A673 (cell line): ENCODE measurements at regions of chr1 and their contacts with region 1.

Region 1: DNA sequence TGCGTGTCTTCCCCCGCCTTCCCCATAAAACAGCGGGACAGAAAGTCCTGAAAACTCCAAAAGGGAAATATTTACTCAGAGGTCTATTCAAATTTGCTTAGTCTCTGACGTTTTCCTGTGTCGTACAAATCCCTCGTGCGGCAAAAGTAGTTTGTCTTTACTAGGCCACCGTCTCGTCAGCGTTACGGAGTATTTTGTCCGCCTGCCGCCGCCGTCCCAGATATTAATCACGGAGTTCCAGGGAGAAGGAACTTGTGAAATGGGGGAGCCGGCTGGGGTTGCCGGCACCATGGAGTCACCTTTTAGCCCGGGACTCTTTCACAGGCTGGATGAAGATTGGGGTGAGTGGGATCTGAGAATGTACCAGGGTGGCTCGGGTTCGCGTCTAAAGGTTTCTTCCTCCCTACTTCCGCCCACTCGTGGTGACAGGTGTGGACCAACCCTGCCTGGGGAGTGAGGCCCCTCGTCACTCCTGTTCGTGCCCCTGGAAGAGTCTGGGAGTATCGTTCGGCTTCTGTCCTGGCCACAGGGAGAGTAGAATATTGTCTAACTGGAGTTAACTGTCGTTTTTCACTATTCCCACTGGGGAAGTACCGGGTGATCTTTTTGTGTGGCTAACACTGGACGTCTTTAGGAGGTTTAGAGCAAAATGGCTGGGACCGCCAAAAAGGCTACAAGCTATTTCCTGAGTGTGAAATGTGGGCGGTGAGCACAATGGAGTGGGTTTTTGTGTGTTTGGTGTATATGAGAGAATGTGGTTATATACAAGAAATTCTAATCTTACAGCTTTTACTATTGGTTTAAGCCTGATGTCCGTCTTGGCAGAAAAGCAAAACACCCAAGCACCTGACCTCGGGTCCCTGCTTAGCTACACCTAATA is at the start of gene ATF6:
- DNase-seq: peak; percentile 96
- H3K4me3 ChIP-seq: peak within 1 kb of the TSS; percentile 67
- H3K27ac ChIP-seq: peak within 1 kb of the TSS; percentile 84
- H3K4me1 ChIP-seq: peaks cover 9% of the 10 kb centered on the region
- H3K27me3 ChIP-seq: no peaks in the 10 kb centered on the region
- CTCF ChIP-seq: no peak
- total RNA-seq, gene ATF6: 21.8 and 24.4 TPM in 2 replicates

Region 2: GRCh38 chr1:162035241-162035640 is 268.9 kb after region 1 on chr1:
- CTCF ChIA-PET with region 1: interaction called, 12 read pairs
- POLR2A ChIA-PET with region 1: no interaction called
- intact Hi-C with region 1: loop called (anchors 10 kb)
- DNase-seq: no peak
- H3K4me3 ChIP-seq: no peak overlapping the region
- H3K27ac ChIP-seq: no peak overlapping the region
- H3K4me1 ChIP-seq: peaks cover 6% of the 10 kb centered on the region
- H3K27me3 ChIP-seq: no peaks in the 10 kb centered on the region
- CTCF ChIP-seq: no peak

Region 3: DNA sequence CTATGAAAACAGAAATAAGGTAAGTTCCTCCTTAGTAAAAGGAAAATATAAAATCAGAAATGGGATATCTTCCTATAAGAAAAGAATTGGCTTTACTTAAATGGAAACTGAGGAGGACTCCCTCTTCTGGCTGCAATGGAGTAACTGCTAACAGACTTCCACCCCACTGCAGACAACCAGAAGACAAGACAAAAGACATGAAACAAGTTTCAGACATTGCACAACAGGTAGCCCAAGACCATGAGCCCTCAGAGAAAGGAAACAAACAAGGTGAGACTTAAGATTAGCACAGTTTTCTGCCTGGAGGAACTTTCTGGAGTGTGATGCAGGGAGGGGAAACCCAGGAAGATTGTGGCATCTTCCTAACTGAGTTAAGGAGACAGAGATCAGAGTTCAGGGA is 274.3 kb after region 1 on chr1:
- CTCF ChIA-PET with region 1: interaction called, 12 read pairs
- POLR2A ChIA-PET with region 1: no interaction called
- intact Hi-C with region 1: loop called (anchors 10 kb)
- DNase-seq: peak; percentile 67
- H3K4me3 ChIP-seq: no peak overlapping the region
- H3K27ac ChIP-seq: no peak overlapping the region
- H3K4me1 ChIP-seq: peaks cover 6% of the 10 kb centered on the region
- H3K27me3 ChIP-seq: no peaks in the 10 kb centered on the region
- CTCF ChIP-seq: peak; percentile 85